HepG2 (cell line): ENCODE measurements at regions of chr3 and their contacts with region 1.

Region 1: GRCh38 chr3:125075738-125076137 is 19.9 kb upstream of the HEG1 start:
- DNase-seq: no peak
- ATAC-seq: peak; percentile 97
- H3K4me3 ChIP-seq: no peak overlapping the region
- H3K27ac ChIP-seq: no peak overlapping the region
- H3K4me1 ChIP-seq: peaks cover 20% of the 10 kb centered on the region
- H3K27me3 ChIP-seq: peaks cover 0 to 2% of the 10 kb centered on the region in 2 experiments; a peak in 1 of 5 replicates
- CTCF ChIP-seq: no peak
- EP300 ChIP-seq: no peak
- POLR2A ChIP-seq: no peak
- RAD21 ChIP-seq: no peak

Region 2: GRCh38 chr3:125062888-125063618 is 12.7 kb before region 1 on chr3:
- CTCF ChIA-PET with region 1: no interaction called
- POLR2A ChIA-PET with region 1: interaction called, 12 read pairs
- in situ Hi-C with region 1: no loop called
- intact Hi-C with region 1: no loop called
- DNase-seq: peak; percentile 99
- ATAC-seq: peak; percentile 92
- H3K4me3 ChIP-seq: peak overlapping the region in 1 of 3 experiments; percentile 27; a peak in 2 of 6 replicates
- H3K27ac ChIP-seq: peak overlapping the region; percentile 67
- H3K4me1 ChIP-seq: peaks cover 61% of the 10 kb centered on the region
- H3K27me3 ChIP-seq: peaks cover 0 to 15% of the 10 kb centered on the region in 2 experiments; a peak in 3 of 5 replicates
- CTCF ChIP-seq: no peak
- EP300 ChIP-seq: peak; percentile 87 to 91; a peak in 2 of 4 replicates
- POLR2A ChIP-seq: peak in 1 of 2 experiments; percentile 66; a peak in 2 of 4 replicates
- RAD21 ChIP-seq: no peak

Region 3: DNA sequence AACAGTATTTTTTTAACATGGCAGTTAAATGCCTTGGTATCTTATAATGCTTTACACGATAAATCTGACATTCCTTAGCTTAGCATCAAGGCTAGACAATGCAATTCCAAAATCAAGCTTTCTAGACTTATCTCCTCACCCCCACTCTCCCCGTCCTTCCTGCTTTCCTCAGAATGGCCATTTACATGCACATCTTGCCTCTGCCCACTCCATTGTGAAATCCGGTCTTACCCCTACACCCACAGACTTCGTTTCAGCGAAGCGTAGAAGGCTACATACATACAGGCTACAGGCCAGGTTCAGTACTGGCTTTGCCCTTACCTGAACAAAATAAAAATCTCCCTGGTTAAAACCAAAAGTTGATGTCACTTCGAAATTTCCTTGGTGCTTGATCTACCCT is 195.4 kb after region 1 on chr3:
- CTCF ChIA-PET with region 1: no interaction called
- POLR2A ChIA-PET with region 1: no interaction called
- in situ Hi-C with region 1: no loop called
- intact Hi-C with region 1: no loop called
- DNase-seq: no peak
- ATAC-seq: no peak
- H3K4me3 ChIP-seq: no peak overlapping the region
- H3K27ac ChIP-seq: no peak overlapping the region
- H3K4me1 ChIP-seq: no peaks in the 10 kb centered on the region
- H3K27me3 ChIP-seq: no peaks in the 10 kb centered on the region
- CTCF ChIP-seq: no peak
- EP300 ChIP-seq: no peak
- POLR2A ChIP-seq: no peak
- RAD21 ChIP-seq: no peak